ENCODE measurements at regions of chr1 and their contacts with region 1.

Region 1: GRCh38 chr1:224182866-224183590 is at the start of gene DEGS1:
- DNase-seq: peak; percentile 77 to 83
- ATAC-seq: peak; percentile 93 to 97 (median 94)
- H3K4me3 ChIP-seq: peak within 1 kb of the TSS; percentile 76 to 100 (median 92)
- H3K27ac ChIP-seq: peak within 1 kb of the TSS; percentile 82 to 99 (median 96)
- H3K4me1 ChIP-seq: peaks cover 3 to 42% (median 24%) of the 10 kb centered on the region in 9 donors
- H3K27me3 ChIP-seq: no peaks in the 10 kb centered on the region
- CTCF ChIP-seq: no peak
- total RNA-seq, gene DEGS1: 33.1 to 79.4 (median 35.7) TPM

Region 2: DNA sequence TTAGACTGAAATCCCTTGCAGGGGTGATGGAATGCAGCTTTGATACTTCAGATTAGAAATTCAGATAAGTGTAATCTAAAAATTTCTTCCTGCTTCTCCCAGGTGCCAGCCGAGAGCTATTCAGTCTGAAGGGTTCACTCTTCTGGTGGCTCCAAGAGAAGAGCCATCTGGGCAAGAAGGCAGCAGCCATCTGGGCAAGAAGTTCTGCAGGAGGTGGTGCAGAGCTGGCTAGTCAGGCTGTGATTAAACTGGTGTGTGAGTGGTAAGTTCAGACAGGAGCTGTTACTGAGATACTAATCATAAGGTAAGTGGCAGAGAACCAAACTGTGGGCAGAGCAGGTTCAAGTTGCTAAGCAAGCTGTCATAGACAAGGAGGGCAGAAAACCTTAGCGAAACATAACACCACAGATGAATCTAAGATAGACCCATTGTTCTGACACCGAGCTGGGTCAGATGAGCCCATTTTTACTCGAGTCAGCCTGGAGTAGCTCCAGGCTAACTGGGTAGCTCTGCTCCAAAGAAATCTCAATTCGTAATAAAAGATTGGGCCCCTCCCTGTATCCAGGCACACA is 322.9 kb before region 1 on chr1:
- intact Hi-C with region 1: no loop called
- DNase-seq: no peak
- ATAC-seq: no peak
- H3K4me3 ChIP-seq: no peak overlapping the region
- H3K27ac ChIP-seq: no peak overlapping the region
- H3K4me1 ChIP-seq: no peaks in the 10 kb centered on the region
- H3K27me3 ChIP-seq: peaks cover 0 to 13% (median 0%) of the 10 kb centered on the region in 7 donors
- CTCF ChIP-seq: no peak

Region 3: GRCh38 chr1:224259936-224260335 is 76.9 kb after region 1 on chr1:
- intact Hi-C with region 1: loop called in 1 of 10 experiments (anchors 10 kb)
- DNase-seq: no peak
- ATAC-seq: no peak
- H3K4me3 ChIP-seq: no peak overlapping the region
- H3K27ac ChIP-seq: no peak overlapping the region
- H3K4me1 ChIP-seq: no peaks in the 10 kb centered on the region
- H3K27me3 ChIP-seq: no peaks in the 10 kb centered on the region
- CTCF ChIP-seq: no peak

Measured in heart right ventricle (tissue), 16 donors.